Activated naive CD4-positive, alpha-beta T cell treated with anti-CD3 and anti-CD28 coated beads, Interleukin-2, amount 10 ng/mL, durations not matched to agents 7 days and 5 days (primary cell): ENCODE measurements at regions of chr1 and their contacts with region 1.

Region 1: DNA sequence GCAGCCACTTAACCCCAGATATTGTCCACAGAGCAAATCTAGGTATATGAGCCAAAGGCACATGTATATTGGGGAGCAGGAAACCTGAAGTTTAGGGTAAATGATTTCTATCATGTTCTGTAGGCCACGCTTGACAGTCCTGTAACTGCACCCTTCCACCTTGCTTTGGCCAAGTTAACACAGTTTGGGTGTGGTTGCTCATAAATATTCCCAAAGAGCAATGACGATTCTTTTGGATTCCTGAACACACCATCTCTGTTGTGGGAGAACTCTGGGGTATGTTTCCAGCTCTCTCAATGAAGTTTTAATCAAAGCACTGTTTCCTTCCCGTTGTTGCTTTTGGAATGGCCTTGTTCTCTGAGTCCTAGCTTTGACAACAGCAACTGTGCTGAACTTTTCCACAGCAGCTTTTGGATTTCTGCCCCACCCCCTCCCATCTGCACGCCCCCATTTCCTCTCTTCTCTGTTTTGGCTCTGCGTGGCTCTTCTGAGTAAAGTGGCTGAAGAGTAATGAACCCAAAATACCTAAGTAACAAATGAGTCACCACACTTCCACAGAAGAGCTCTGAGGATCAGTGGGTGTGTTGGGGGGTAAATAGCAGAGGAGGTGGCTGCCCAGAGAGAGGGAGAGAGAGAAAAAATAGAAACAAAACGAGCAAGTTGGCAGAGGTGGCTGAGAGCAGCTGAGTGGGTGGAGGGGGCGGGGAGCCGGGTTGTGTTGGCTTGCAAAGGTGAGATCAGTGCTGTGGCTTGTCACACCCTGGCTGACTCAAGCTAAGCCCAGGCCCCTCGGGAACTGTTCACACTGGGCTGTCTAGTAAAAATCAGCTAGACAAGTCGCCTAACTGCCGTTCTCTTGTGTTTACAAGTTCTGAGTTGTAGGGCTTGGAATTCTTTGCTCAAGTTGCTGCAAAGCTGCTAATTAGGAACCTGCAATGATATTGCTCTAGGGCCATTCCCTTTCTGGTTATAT is 26.9 kb upstream of the RAP1A start:
- DNase-seq: peak; percentile 94
- H3K4me3 Mint-ChIP-seq: peak overlapping the region; percentile 43
- H3K27ac Mint-ChIP-seq: peak overlapping the region; percentile 92
- H3K4me1 Mint-ChIP-seq: peaks cover 61% of the 10 kb centered on the region
- H3K27me3 Mint-ChIP-seq: no peaks in the 10 kb centered on the region

Region 2: DNA sequence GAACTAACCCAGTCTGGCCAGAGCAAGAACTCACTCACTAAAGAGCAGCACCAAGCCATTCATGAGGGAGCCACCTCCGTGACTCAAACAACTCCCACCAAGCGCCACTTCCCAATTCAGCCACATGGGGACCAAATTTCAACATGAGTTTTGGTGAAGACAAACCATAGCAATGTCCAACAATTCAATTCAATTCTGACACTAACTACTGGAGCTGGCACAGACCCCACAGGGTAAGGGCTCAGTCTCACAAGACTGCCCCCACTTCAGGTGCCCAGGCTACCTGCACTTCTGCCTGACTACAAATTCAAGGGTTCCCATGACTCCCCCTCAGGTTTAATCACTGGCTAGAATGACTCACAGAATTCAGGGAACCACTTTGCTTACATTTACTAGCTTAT is 21.9 kb before region 1 on chr1:
- CTCF ChIA-PET with region 1: interaction called, 10 read pairs
- DNase-seq: peak; percentile 46
- H3K4me3 Mint-ChIP-seq: no peak overlapping the region
- H3K27ac Mint-ChIP-seq: no peak overlapping the region
- H3K4me1 Mint-ChIP-seq: no peaks in the 10 kb centered on the region
- H3K27me3 Mint-ChIP-seq: peaks cover 7% of the 10 kb centered on the region

Region 3: DNA sequence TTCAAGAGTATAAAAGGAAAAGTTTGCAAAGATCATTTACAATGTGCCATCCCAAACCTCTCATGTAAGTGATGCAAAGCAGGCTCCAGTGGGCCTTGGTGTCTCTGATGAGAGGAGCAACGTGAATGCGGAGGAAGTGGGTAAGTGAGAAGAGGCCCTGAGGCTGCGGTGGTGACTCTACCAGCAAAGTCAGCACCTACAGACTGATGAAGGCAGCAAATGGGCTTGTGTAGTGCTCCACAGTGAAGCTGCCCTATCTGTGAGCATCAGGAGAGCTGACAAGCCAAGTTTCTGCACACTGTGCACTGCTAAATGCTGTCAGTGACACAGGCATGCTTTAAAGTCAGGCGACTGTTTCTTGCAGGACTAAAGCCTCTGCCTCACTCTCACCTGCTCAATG is 11.3 kb after region 1 on chr1:
- CTCF ChIA-PET with region 1: interaction called, 16 read pairs
- DNase-seq: peak; percentile 88
- H3K4me3 Mint-ChIP-seq: peak overlapping the region; percentile 12
- H3K27ac Mint-ChIP-seq: peak overlapping the region; percentile 91
- H3K4me1 Mint-ChIP-seq: peaks cover 75% of the 10 kb centered on the region
- H3K27me3 Mint-ChIP-seq: no peaks in the 10 kb centered on the region

Region 4: GRCh38 chr1:111658622-111659021 is 65.9 kb after region 1 on chr1:
- CTCF ChIA-PET with region 1: no interaction called
- DNase-seq: no peak
- H3K4me3 Mint-ChIP-seq: no peak overlapping the region
- H3K27ac Mint-ChIP-seq: no peak overlapping the region
- H3K4me1 Mint-ChIP-seq: peaks cover 35% of the 10 kb centered on the region
- H3K27me3 Mint-ChIP-seq: no peaks in the 10 kb centered on the region

Region 5: GRCh38 chr1:111904478-111905218 is 312.0 kb after region 1 on chr1:
- CTCF ChIA-PET with region 1: no interaction called
- DNase-seq: no peak
- H3K4me3 Mint-ChIP-seq: no peak overlapping the region
- H3K27ac Mint-ChIP-seq: no peak overlapping the region
- H3K4me1 Mint-ChIP-seq: no peaks in the 10 kb centered on the region
- H3K27me3 Mint-ChIP-seq: peaks cover 44% of the 10 kb centered on the region